ENCODE measurements at regions of chr6 and their contacts with region 1.

Region 1: DNA sequence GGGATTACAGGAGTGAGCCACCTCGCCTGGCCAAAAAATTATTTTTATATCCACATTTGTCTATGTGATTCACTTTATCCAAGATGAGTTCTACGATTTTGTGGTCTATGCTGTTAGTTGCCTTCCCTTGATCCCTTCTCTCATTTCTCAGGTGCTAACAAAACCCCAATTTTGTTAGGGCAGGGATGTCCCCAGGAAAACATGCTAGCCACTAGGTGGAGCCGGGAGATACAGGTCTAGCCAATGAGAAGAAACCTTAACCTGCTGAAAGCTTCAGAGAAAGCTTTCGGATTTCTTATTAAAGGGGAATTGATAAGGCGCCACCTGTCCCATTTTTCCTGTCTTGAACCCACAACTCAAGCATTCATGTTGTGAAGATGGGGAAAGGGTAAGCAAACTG is 167.4 kb upstream of the OLIG3 start:
- DNase-seq: peak; percentile 66
- ATAC-seq: peak; percentile 57
- H3K4me3 Mint-ChIP-seq: no peak overlapping the region
- H3K27ac Mint-ChIP-seq: no peak overlapping the region
- H3K4me1 Mint-ChIP-seq: peaks cover 28% of the 10 kb centered on the region
- H3K27me3 Mint-ChIP-seq: no peaks in the 10 kb centered on the region

Region 2: GRCh38 chr6:137676888-137677287 is 15.3 kb after region 1 on chr6:
- CTCF ChIA-PET with region 1: interaction called, 11 read pairs
- POLR2A ChIA-PET with region 1: no interaction called
- DNase-seq: no peak
- ATAC-seq: peak; percentile 81
- H3K4me3 Mint-ChIP-seq: peak overlapping the region; percentile 30
- H3K27ac Mint-ChIP-seq: peak overlapping the region; percentile 72
- H3K4me1 Mint-ChIP-seq: peaks cover 34% of the 10 kb centered on the region
- H3K27me3 Mint-ChIP-seq: no peaks in the 10 kb centered on the region

Region 3: GRCh38 chr6:137697267-137697938 is 35.8 kb after region 1 on chr6:
- CTCF ChIA-PET with region 1: interaction called, 88 read pairs
- POLR2A ChIA-PET with region 1: no interaction called
- DNase-seq: no peak
- ATAC-seq: peak; percentile 17
- H3K4me3 Mint-ChIP-seq: no peak overlapping the region
- H3K27ac Mint-ChIP-seq: no peak overlapping the region
- H3K4me1 Mint-ChIP-seq: peaks cover 38% of the 10 kb centered on the region
- H3K27me3 Mint-ChIP-seq: peaks cover 5% of the 10 kb centered on the region

Region 4: GRCh38 chr6:138526822-138527235 is 865.2 kb after region 1 on chr6:
- CTCF ChIA-PET with region 1: no interaction called
- POLR2A ChIA-PET with region 1: no interaction called
- DNase-seq: no peak
- ATAC-seq: no peak
- H3K4me3 Mint-ChIP-seq: no peak overlapping the region
- H3K27ac Mint-ChIP-seq: no peak overlapping the region
- H3K4me1 Mint-ChIP-seq: peaks cover 2% of the 10 kb centered on the region
- H3K27me3 Mint-ChIP-seq: peaks cover 31% of the 10 kb centered on the region